ENCODE measurements at regions of chr6 and their contacts with region 1.

Region 1: DNA sequence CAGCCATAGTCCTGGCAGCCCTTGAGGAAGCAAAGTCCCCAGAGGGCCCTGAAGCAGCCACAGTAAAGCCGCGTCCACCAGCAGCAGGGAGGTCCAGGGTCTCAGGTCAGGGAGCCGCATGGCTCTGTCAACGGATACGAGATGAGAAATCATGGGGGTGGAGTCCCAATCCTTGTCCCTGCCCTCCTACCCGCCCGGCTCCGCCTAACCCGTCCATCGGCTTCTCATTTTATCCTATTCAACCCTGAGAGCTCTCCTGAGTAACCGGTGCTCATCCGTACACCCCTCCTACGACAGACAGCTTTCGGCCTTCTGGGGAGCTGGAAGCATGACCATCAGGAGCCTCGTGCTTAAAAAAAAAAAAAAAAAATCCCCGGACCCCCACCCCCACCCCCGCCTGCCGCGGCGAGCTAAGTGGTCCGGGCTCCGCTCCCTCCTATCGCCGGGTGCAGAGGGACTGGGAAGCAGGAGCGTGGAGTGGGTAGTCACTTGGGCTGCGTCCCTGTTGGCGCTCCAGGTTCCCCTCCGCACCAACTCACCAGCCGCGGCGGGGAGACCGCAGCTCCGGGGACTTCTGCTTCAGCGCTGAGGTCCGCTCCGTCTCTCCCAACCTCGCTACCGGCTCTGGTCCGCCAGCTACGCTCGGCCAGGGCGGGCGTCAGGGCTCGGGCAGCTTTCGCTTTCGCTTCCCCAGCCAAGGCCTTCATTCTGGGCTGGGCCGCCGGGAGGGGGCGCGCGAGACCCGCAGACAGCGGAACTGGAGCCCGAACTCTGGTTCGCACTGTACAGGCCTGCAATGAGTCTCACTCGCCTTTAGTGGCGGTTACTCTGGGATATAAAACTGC is at the start of gene TAP2:
- DNase-seq: peak; percentile 88
- H3K4me3 ChIP-seq: peak within 1 kb of the TSS; percentile 75 to 88 (median 86)
- H3K27ac ChIP-seq: peak within 1 kb of the TSS; percentile 60
- H3K4me1 ChIP-seq: peaks cover 9% of the 10 kb centered on the region
- H3K27me3 ChIP-seq: no peaks in the 10 kb centered on the region
- CTCF ChIP-seq: peak; percentile 80 to 97
- total RNA-seq, gene TAP2: 41.8 to 63.4 TPM

Region 2: DNA sequence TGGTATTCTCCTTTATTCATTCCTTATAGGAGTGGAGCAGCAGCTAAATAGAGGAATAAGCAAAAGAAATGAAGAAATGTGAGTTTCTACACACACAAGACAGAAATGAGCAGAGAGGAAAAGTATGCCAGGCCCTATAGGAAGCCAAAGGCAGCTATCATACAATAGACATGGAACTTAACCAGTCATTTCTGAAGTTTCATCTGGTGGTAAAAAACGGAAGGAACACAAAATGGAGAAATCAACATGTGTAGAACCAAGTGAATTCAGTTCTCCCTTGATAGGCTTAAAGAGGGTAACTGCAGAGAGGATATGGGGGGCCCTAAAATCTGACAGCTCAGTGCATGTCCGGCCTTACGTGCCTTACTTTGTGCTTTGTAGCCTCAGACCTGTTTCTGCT is 511.2 kb before region 1 on chr6:
- CTCF ChIA-PET with region 1: no interaction called
- dilution Hi-C with region 1: no loop called
- in situ Hi-C with region 1: no loop called
- intact Hi-C with region 1: no loop called
- DNase-seq: no peak
- H3K4me3 ChIP-seq: no peak overlapping the region
- H3K27ac ChIP-seq: no peak overlapping the region
- H3K4me1 ChIP-seq: no peaks in the 10 kb centered on the region
- H3K27me3 ChIP-seq: peaks cover 2% of the 10 kb centered on the region
- CTCF ChIP-seq: no peak

Region 3: DNA sequence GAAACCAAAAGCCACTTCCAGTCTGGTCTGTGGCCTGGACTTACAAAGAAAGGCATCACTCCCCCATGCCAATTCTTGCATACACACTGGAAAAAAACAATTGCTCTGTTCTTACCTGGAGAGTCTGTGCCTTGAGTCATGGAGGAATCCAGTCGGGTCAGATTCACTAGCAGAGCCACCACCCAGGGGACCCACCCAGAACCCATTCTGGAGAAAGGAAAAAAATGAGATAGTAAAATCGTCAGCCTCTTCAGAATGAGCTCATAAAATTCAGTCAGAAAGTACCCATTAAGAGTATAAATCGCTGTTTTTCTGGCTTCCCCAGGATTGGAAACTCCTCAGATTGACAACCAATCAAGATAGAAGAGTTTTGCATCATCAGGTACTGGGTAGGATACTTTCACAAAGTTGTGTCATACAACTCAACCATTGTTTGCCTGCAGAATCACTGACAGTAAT is 21.6 kb before region 1 on chr6 and contains the start of gene HLA-DOB:
- CTCF ChIA-PET with region 1: no interaction called
- dilution Hi-C with region 1: no loop called
- in situ Hi-C with region 1: no loop called
- intact Hi-C with region 1: loop called (anchors 2 kb)
- DNase-seq: peak; percentile 92
- H3K4me3 ChIP-seq: peak within 1 kb of the TSS; percentile 1 to 15 (median 2)
- H3K27ac ChIP-seq: peak within 1 kb of the TSS; percentile 78
- H3K4me1 ChIP-seq: peaks cover 57% of the 10 kb centered on the region
- H3K27me3 ChIP-seq: no peaks in the 10 kb centered on the region
- CTCF ChIP-seq: no peak
- total RNA-seq, gene HLA-DOB: 5.5 to 8.3 TPM

Region 4: DNA sequence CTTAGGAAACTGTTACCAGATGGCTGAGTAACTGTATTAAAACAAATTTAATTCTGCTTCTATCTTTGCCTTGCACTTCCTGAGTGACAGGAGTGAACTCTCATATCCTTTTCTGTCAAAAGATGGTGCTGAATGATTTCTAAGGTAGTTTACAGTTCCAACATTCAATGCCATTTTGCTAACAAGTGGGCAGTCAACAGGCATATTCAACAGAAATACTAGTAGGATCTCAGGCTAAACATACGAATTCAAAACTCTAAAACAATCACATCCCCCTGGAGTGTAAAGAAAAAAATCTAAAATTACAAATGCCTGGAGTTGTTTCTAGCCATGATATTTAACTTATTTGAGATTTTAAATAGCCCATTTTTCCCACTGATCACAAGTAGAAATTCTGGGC is 22.3 kb after region 1 on chr6:
- CTCF ChIA-PET with region 1: interaction called, 26 read pairs
- dilution Hi-C with region 1: no loop called
- in situ Hi-C with region 1: no loop called
- intact Hi-C with region 1: no loop called
- DNase-seq: no peak
- H3K4me3 ChIP-seq: no peak overlapping the region
- H3K27ac ChIP-seq: peak overlapping the region; percentile 51
- H3K4me1 ChIP-seq: peaks cover 6% of the 10 kb centered on the region
- H3K27me3 ChIP-seq: no peaks in the 10 kb centered on the region
- CTCF ChIP-seq: no peak

Region 5: DNA sequence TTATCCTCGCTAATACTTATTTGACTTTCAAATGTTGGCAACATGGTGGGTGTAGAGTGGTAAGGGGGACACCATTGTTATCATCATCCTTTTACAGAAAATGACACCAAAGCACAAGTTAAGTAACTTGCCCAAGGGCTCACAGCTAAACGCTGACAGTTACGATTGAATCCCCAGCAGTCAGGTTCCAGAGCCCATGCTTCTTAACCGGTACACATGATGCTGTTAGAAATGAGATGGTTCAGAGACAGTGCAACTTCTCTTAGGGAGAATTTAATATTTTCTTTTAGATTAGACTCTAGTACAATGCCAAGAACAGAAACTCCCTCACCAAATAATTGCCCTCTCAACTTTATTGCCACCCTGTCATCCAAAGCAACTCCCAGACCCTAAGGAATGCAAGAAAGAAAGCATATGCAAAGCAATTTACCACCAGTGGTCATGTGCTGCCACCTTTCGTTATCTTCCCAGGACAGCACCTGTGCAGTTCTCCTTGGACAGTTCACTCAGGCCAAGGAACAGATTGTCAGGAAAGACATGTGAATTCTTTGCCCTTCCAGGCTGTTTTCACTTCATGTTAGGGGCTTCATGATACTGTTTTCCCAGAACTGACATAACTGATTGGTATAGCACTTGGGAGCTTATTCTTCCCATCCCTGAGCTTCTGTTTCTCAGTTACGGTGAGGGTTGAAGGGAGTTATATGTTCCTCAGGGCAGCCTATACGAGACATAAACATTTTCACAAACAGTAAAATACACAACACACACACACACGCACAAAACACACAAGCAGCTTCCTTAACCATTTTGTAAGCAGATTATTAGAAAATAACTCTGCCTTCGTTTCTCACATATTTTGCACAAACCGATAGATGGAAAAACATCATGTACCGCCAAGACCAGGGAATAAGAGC is 109.5 kb after region 1 on chr6:
- CTCF ChIA-PET with region 1: no interaction called
- dilution Hi-C with region 1: no loop called
- in situ Hi-C with region 1: no loop called
- intact Hi-C with region 1: loop called (anchors 1 kb)
- DNase-seq: peak; percentile 51
- H3K4me3 ChIP-seq: no peak overlapping the region
- H3K27ac ChIP-seq: no peak overlapping the region
- H3K4me1 ChIP-seq: peaks cover 4% of the 10 kb centered on the region
- H3K27me3 ChIP-seq: no peaks in the 10 kb centered on the region
- CTCF ChIP-seq: peak; percentile 63 to 80